Left colon (tissue), 2 donors: ENCODE measurements at regions of chr17 and their contacts with region 1.

Region 1: GRCh38 chr17:48678141-48678971 is 44.0 kb downstream of the PRAC1 start:
- DNase-seq: peak; percentile 58 to 81
- ATAC-seq: peak; percentile 89

Region 2: GRCh38 chr17:48610282-48611211 is 67.8 kb before region 1 on chr17 and contains the start of gene HOXB7:
- intact Hi-C with region 1: no loop called
- DNase-seq: peak; percentile 80 to 90
- ATAC-seq: peak; percentile 73
- total RNA-seq, gene HOXB7: 26.6 to 30.2 TPM

Region 3: GRCh38 chr17:48728232-48729231 is 50.2 kb after region 1 on chr17 and contains the start of gene HOXB13:
- intact Hi-C with region 1: no loop called
- DNase-seq: peak; percentile 89 to 93
- ATAC-seq: peak; percentile 73
- total RNA-seq, gene HOXB13: 39.4 to 88.0 TPM

Region 4: DNA sequence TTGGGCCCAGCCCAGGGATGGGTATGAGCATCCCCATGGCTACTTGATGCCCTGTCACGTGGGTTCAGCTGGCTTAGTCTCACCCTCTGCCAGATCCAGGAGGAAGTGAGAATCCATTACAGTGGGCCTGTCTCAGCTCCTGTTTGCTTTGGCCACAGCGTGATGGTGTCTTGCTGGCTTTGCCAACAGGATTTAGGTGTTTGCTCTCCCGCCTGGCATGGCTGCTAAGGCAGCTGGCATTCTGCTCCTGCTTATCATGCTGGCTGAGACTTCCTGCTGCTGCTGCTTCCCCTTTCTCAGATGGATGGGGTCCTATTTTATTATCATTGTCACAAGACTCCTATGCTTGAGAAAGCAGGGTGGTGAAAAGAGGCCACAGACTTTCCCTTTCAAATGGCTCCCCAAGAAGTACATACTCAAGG is 78.5 kb after region 1 on chr17:
- intact Hi-C with region 1: no loop called
- DNase-seq: peak; percentile 44 to 51
- ATAC-seq: peak; percentile 45

Region 5: DNA sequence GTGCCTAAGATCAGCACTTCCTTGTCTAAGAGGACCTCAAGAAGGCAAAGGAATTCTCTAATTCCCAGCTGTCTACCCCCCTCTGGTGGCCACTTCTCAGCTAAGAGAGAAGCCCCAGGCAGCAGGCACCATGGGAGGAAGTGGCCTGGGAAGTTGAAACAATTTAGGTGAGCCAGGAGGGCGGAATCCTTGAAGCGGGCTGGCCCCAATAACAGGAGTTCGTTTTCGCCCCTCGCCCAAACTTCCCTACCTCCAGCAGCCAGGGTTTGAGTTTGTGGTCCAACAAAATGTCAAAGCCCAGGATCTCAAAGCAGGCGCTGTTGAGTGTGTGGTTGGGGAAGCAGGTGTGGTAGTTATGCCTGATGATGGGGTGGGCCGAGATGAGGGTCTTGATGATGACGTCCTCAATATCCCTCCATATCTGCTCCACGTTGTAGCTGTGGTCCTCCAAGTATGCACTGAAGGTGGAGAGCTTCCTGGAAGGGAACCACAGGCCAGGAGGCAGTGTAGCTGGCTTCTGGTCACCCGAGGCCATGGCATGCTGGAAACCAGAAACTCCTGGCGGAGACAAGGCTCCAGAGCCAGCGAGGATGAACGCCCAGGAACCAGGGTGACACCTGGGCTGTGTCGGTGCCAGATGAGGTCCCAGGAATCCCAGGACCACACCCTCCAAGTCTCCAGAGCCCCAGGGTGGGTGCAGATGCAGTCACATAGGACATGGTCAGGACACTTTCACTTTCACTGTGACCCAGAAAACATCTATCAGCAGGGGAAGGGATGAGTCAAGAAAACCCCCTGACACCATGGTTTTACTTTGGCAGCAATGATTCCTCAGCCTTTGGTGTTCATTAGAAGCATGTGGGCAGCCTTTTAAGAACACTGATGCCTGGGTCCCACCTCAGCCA is 113.0 kb after region 1 on chr17:
- intact Hi-C with region 1: loop called (anchors 5 to 10 kb)
- DNase-seq: peak; percentile 89 to 93
- ATAC-seq: peak; percentile 80

Region 6: DNA sequence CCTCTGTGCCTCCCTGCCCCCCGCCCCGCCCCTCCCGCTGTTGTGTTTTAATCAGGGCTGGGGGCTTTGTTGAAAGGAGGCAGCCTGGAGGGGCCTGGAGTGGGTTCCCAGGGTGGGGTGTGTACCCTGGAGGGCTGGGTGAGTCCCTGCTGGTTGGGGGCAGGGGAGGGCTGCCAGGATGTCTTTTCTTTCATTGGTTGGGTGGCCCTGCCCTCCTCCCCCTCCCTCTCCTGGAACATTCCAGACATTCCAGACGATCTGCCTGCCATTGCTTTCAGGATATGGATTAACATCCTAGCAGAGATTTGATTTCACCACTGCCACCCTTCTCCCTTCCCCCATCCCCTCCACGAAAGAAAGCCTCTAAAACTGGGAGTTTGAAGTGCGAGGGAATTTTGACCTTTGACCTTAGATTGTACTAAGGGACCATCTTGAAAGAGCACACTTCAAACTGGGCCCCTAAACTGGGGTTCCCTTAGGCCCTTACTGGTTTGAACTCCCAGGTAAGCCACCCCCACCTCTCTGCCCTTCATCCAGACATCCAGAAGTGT is 344.1 kb after region 1 on chr17:
- intact Hi-C with region 1: loop called in 1 of 2 experiments (anchors 10 kb)
- DNase-seq: no peak
- ATAC-seq: no peak